ENCODE measurements at regions of chr3 and their contacts with region 1.

Region 1: DNA sequence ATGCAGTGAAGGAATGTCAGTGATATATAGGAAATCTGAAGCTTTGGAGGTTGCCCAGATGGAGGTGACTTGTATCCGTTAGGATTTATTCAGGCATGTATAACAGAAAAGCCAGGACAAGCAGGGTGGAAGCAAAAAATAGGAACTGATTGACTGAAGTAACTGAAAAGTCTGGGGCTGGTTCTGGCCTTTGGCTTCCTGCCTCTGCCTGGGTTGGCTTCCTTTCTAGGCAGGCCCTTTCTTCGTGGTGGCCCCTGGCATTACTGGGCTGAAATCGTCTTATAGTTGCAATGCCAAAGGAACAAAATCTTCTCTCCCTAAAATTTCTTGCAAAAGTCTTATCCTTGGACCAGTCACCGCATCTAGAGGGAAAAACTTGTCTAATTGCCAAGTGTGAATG is 386.1 kb downstream of the PTPRG start:
- DNase-seq: no peak
- H3K4me3 ChIP-seq: no peak overlapping the region
- CTCF ChIP-seq: no peak

Region 2: DNA sequence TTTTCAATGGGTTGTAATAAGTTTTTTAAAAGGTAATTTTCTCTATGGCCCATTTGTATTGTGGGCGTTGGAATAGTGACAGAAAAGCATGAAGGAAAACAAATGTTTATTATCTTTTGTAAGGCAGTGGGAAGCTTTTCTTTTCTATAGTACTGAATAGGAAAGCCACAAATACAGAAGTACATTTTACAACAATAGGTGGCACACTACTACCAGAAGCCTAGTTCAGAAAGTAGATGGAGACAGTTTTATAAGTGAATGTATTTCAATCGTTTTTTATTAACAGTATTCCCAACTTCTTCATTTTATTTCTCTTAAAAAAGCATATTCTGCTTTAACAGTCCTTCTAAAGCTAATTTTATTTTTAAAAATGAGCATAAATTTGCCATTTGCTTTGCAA is 89.4 kb before region 1 on chr3:
- in situ Hi-C with region 1: no loop called
- DNase-seq: no peak
- H3K4me3 ChIP-seq: no peak overlapping the region
- CTCF ChIP-seq: peak; percentile 38

Region 3: DNA sequence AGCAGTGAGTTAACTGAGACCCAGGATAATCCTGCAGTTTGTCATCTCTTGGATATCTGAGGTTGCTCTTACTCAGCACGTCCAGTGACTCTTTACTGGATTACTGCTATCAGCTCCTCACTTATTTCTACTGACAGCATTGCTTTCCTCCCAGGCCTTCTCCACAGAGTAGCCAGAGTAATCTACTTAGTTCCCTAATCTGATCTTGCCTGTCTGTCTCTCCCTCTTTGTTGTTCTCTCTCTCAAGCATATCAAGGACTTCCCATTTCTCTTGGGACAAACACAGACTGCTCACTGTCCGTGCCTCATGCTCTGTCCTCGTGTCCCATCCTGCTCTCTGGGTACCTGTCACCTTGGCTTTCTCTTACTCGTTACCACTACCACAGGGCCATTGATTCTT is 49.6 kb after region 1 on chr3:
- in situ Hi-C with region 1: loop called (anchors 5 kb)
- DNase-seq: no peak
- H3K4me3 ChIP-seq: no peak overlapping the region
- CTCF ChIP-seq: no peak

Region 4: DNA sequence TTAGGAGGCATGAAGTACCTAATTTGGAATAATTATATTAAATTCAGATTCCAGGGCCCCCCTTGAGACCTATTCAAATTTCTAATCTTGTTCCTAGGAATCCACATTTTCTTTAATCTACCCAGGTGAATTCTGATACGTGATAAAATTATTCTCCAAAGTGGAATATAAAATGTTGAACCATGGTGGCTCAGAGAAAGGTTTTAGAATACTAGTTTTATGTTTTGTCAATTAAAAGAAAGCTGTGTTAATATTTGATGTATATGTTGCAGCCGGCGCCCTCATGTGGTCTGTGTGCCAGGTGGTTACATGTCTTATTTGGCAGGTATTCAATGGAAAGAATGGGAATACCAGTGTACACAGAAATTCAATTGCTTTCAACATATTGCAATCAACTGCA is 104.1 kb after region 1 on chr3:
- in situ Hi-C with region 1: no loop called
- DNase-seq: peak; percentile 16
- H3K4me3 ChIP-seq: no peak overlapping the region
- CTCF ChIP-seq: peak; percentile 37

Measured in astrocyte of the cerebellum (primary cell).